Activated naive CD4-positive, alpha-beta T cell treated with anti-CD3 and anti-CD28 coated beads, Interleukin-2, amount 10 ng/mL, durations not matched to agents 7 days and 5 days (primary cell): ENCODE measurements at regions of chr19 and their contacts with region 1.

Region 1: GRCh38 chr19:46283771-46284170 is 13.1 kb upstream of the HIF3A start:
- DNase-seq: no peak
- H3K4me3 Mint-ChIP-seq: no peak overlapping the region
- H3K27ac Mint-ChIP-seq: no peak overlapping the region
- H3K4me1 Mint-ChIP-seq: no peaks in the 10 kb centered on the region
- H3K27me3 Mint-ChIP-seq: peaks cover 7% of the 10 kb centered on the region

Region 2: DNA sequence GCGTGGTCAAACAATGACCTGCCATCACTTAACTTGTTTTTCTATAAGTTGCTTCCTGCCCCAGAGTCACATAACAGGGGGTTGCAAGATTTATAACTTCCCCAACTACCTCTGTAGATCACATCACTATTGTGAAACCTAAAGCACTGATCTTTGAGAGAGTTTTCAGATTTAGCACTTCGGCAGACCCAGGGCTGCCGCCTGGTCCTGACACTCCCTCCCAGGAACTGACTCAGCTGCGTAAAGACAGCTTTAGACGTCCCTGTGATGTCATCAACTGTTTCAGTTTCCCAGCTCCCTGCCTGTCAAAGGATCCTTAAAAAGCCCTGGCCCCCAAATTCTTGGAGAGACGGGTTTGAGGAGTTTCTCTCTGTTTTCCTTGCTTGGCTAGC is 102.4 kb before region 1 on chr19:
- CTCF ChIA-PET with region 1: no interaction called
- DNase-seq: no peak
- H3K4me3 Mint-ChIP-seq: no peak overlapping the region
- H3K27ac Mint-ChIP-seq: no peak overlapping the region
- H3K4me1 Mint-ChIP-seq: peaks cover 12% of the 10 kb centered on the region
- H3K27me3 Mint-ChIP-seq: peaks cover 51% of the 10 kb centered on the region

Region 3: GRCh38 chr19:46265217-46265828 is 18.4 kb before region 1 on chr19:
- CTCF ChIA-PET with region 1: interaction called, 10 read pairs
- DNase-seq: peak; percentile 79
- H3K4me3 Mint-ChIP-seq: no peak overlapping the region
- H3K27ac Mint-ChIP-seq: no peak overlapping the region
- H3K4me1 Mint-ChIP-seq: peaks cover 18% of the 10 kb centered on the region
- H3K27me3 Mint-ChIP-seq: peaks cover 64% of the 10 kb centered on the region

Region 4: DNA sequence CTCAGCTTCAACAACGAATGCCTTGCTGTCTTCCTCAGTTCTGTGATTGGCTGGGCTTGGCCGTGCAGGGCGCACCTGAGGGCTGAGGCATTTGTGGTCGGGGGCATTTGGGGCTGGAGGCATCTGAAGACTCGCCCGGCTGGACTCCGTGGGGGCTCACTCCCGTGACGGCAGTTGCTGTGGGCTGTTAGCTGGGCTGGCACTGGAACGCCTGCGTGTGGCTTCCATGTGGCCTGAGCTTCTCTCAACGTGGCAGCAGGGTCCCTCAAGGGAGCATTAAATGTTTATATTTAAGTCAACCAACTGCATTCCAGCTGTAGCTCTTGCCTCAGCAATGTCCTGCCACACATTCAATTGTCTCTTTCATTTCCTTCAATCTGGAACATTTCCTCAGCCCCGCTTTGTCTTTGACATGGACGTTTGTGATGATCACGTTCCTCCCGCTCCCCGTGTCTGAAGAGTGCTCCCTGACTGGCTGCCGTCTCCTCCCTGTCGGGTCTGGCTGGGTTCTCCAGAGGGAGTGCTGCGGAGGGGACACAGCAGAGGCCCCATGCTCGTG is 108.6 kb after region 1 on chr19:
- CTCF ChIA-PET with region 1: interaction called, 13 read pairs
- DNase-seq: no peak
- H3K4me3 Mint-ChIP-seq: no peak overlapping the region
- H3K27ac Mint-ChIP-seq: no peak overlapping the region
- H3K4me1 Mint-ChIP-seq: no peaks in the 10 kb centered on the region
- H3K27me3 Mint-ChIP-seq: no peaks in the 10 kb centered on the region

Region 5: DNA sequence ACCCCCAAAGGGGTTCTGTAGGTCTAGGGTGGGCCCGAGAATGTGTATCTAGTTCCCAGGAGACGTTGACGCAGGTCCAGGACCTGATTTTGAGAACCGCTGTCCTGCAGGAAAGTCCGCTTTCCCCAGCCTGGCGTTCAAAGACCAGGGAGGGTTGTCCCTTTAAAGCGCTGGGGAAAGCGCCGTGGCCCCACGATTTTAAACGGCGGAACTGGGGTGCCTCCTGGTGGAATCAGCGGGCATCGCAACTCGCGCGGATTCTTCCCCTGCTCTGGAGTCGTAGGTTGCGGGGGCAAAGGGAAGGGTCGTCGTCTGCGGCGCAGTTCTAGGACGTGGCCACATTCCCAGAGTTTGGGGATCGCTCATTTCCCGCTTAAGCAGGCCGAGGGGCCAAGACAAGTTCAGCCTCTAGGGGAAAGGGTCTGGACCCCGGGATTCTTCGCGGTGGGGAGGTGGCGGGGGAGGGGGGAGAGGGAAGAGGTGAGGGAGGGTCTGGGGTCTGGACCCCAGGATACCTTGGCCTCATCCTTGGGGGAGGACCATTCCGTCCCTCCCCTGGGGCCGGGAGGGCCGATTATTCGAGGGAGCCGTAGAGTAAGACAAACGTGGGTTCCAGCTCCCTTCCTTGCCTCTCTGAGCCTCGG is 204.2 kb after region 1 on chr19:
- CTCF ChIA-PET with region 1: interaction called, 24 read pairs
- DNase-seq: peak; percentile 80
- H3K4me3 Mint-ChIP-seq: no peak overlapping the region
- H3K27ac Mint-ChIP-seq: no peak overlapping the region
- H3K4me1 Mint-ChIP-seq: peaks cover 18% of the 10 kb centered on the region
- H3K27me3 Mint-ChIP-seq: peaks cover 91% of the 10 kb centered on the region